Pancreas (tissue), 10 donors: ENCODE measurements at regions of chr16 and their contacts with region 1.

Region 1: GRCh38 chr16:58336332-58337089 is 41.7 kb upstream of the PRSS54 start:
- DNase-seq: peak; percentile 67 to 95 (median 82)
- ATAC-seq: peak; percentile 95 to 99 (median 97)
- H3K4me3 ChIP-seq: peak overlapping the region in 2 of 4 donors; percentile 25 to 32
- H3K27ac ChIP-seq: no peak overlapping the region
- H3K4me1 ChIP-seq: no peaks in the 10 kb centered on the region
- H3K27me3 ChIP-seq: no peaks in the 10 kb centered on the region
- CTCF ChIP-seq: peak; percentile 72 to 91 (median 80)

Region 2: GRCh38 chr16:58487566-58488351 is 151.2 kb after region 1 on chr16:
- intact Hi-C with region 1: loop called (anchors 5 to 10 kb)
- DNase-seq: peak; percentile 65 to 93 (median 82)
- ATAC-seq: peak; percentile 94 to 99 (median 98)
- H3K4me3 ChIP-seq: peak overlapping the region in 1 of 4 donors; percentile 24
- H3K27ac ChIP-seq: no peak overlapping the region
- H3K4me1 ChIP-seq: no peaks in the 10 kb centered on the region
- H3K27me3 ChIP-seq: no peaks in the 10 kb centered on the region
- CTCF ChIP-seq: peak; percentile 84 to 96 (median 92)

Region 3: GRCh38 chr16:58755989-58756649 is 419.6 kb after region 1 on chr16:
- intact Hi-C with region 1: loop called in 1 of 3 experiments (anchors 10 kb)
- DNase-seq: peak in 4 of 6 donors; percentile 19 to 45 (median 41)
- ATAC-seq: peak in 3 of 4 donors; percentile 90 to 92 (median 92)
- H3K4me3 ChIP-seq: no peak overlapping the region
- H3K27ac ChIP-seq: no peak overlapping the region
- H3K4me1 ChIP-seq: no peaks in the 10 kb centered on the region
- H3K27me3 ChIP-seq: no peaks in the 10 kb centered on the region
- CTCF ChIP-seq: peak in 2 of 4 donors; percentile 23